CD4-positive, alpha-beta T cell (primary cell): ENCODE measurements at regions of chr9 and their contacts with region 1.

Region 1: DNA sequence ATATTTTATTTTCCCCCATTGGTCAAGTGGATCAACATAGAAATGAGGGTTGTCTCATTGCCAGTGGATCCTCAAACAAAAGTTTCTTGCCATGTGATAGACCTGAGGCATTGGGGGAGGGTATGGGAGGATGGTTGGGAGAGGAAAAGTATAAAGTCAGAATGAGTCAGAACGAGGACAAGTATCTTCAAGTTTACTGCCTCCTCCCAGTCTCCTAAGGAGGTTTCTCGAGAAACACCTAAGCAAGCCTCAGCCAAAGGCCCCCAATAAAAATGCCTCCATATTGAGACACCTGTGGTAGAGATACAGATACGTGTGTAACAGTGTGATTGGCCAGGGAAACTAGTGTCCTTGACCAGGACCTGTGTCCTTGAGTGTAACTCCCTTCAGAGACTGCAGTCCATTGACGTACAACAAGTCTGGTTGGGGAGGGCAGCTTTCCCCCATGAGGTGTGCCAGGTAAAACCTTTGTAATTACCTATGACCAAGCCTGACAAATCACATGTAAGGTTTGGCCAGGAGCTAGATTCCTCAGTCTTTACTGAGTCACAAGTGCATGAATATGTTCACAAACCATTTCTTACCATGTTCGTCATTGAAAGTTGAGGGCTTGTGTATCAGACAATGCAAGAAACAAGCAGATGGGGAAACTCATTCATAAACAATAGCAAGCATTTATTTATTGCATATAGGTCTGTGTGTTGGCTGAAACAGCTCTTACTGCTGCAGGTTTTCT is 198.6 kb upstream of the SH3GL2 start:
- DNase-seq: no peak
- ATAC-seq: no peak
- H3K4me3 ChIP-seq: no peak overlapping the region
- H3K4me3 Mint-ChIP-seq: no peak overlapping the region
- H3K27ac ChIP-seq: no peak overlapping the region
- H3K27ac Mint-ChIP-seq: no peak overlapping the region
- H3K4me1 ChIP-seq: no peaks in the 10 kb centered on the region
- H3K4me1 Mint-ChIP-seq: no peaks in the 10 kb centered on the region
- H3K27me3 ChIP-seq: no peaks in the 10 kb centered on the region
- H3K27me3 Mint-ChIP-seq: no peaks in the 10 kb centered on the region
- CTCF ChIP-seq: no peak

Region 2: GRCh38 chr9:17229945-17230560 is 150.2 kb before region 1 on chr9:
- CTCF ChIA-PET with region 1: no interaction called
- POLR2A ChIA-PET with region 1: no interaction called
- intact Hi-C with region 1: no loop called
- DNase-seq: no peak
- ATAC-seq: no peak
- H3K4me3 ChIP-seq: no peak overlapping the region
- H3K4me3 Mint-ChIP-seq: no peak overlapping the region
- H3K27ac ChIP-seq: no peak overlapping the region
- H3K27ac Mint-ChIP-seq: no peak overlapping the region
- H3K4me1 ChIP-seq: no peaks in the 10 kb centered on the region
- H3K4me1 Mint-ChIP-seq: no peaks in the 10 kb centered on the region
- H3K27me3 ChIP-seq: no peaks in the 10 kb centered on the region
- H3K27me3 Mint-ChIP-seq: no peaks in the 10 kb centered on the region
- CTCF ChIP-seq: no peak

Region 3: DNA sequence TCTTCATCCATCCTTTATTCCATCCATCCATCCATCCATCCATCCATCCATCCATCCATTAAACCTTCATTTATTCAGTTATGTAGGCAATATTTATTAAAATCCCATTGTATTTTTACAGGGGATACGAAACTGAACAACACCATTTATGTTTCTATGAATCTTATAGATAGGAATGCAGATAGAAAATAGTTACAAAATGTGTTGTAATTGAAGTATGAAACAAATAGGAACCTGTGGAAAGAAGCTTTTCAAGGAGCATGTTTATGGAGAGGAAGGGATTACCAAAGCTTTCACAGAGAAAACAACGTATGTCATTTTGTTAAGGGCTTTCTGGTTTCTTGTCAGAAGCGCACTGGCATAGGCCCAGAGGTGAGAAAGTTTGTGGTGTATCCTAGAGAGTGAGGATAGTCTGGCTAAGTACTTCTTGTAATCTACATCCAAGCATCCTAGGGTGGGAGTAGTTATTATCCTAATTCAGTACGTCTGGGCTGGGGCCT is 61.4 kb before region 1 on chr9:
- CTCF ChIA-PET with region 1: no interaction called
- POLR2A ChIA-PET with region 1: no interaction called
- intact Hi-C with region 1: loop called in 1 of 2 experiments (anchors 10 kb)
- DNase-seq: no peak
- ATAC-seq: no peak
- H3K4me3 ChIP-seq: no peak overlapping the region
- H3K4me3 Mint-ChIP-seq: no peak overlapping the region
- H3K27ac ChIP-seq: no peak overlapping the region
- H3K27ac Mint-ChIP-seq: no peak overlapping the region
- H3K4me1 ChIP-seq: no peaks in the 10 kb centered on the region
- H3K4me1 Mint-ChIP-seq: no peaks in the 10 kb centered on the region
- H3K27me3 ChIP-seq: no peaks in the 10 kb centered on the region
- H3K27me3 Mint-ChIP-seq: no peaks in the 10 kb centered on the region
- CTCF ChIP-seq: no peak